ENCODE measurements at regions of chr15 and their contacts with region 1.

Region 1: DNA sequence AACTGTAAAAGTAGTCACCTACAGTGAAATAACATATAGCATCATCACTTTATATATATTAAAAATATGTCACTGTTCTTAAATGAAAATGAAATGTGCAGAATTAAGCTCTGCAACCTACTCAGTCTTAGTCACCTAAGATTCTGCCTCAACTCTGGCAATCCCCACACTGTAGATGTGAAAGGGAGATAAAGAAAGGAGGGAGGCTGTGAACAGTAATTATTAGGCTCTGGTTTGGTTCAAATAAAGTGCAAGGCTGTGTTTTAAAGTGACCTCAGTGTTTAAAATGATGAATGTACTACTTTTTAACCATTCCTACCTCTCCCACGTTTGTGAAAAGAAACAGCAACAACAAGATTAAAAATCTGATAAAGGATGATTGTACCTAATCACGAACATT is 72.2 kb downstream of the ATP8B4 start:
- DNase-seq: no peak
- H3K4me3 Mint-ChIP-seq: no peak overlapping the region
- H3K27ac Mint-ChIP-seq: peak overlapping the region; percentile 79
- H3K4me1 Mint-ChIP-seq: peaks cover 40% of the 10 kb centered on the region
- H3K27me3 Mint-ChIP-seq: no peaks in the 10 kb centered on the region

Region 2: GRCh38 chr15:50107591-50108408 is 60.9 kb after region 1 on chr15:
- intact Hi-C with region 1: loop called (anchors 2 kb)
- DNase-seq: peak; percentile 29
- H3K4me3 Mint-ChIP-seq: peak overlapping the region; percentile 61
- H3K27ac Mint-ChIP-seq: peak overlapping the region; percentile 94
- H3K4me1 Mint-ChIP-seq: peaks cover 83% of the 10 kb centered on the region
- H3K27me3 Mint-ChIP-seq: no peaks in the 10 kb centered on the region

Region 3: DNA sequence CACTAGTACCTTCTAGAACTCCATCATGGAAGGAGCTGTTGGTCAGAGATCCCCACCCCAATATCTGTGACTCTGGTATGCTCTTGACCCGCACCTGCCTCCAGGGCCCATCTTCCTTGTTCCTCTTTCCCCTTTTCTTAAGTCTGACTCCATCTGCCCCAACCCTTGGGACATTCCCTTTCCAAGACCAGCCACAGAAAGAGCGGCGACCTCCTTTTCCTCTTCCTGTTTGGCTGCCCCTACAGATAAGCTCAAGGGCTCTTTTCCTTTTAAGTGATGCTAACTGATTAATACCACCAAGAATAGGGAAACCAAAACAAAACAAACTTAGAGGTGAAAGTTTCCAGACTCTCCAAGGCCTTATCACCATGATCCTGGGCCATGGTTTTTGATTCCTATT is 94.1 kb after region 1 on chr15:
- intact Hi-C with region 1: no loop called
- DNase-seq: no peak
- H3K4me3 Mint-ChIP-seq: no peak overlapping the region
- H3K27ac Mint-ChIP-seq: peak overlapping the region; percentile 56
- H3K4me1 Mint-ChIP-seq: peaks cover 62% of the 10 kb centered on the region
- H3K27me3 Mint-ChIP-seq: no peaks in the 10 kb centered on the region